ENCODE measurements at regions of chr14 and their contacts with region 1.

Region 1: DNA sequence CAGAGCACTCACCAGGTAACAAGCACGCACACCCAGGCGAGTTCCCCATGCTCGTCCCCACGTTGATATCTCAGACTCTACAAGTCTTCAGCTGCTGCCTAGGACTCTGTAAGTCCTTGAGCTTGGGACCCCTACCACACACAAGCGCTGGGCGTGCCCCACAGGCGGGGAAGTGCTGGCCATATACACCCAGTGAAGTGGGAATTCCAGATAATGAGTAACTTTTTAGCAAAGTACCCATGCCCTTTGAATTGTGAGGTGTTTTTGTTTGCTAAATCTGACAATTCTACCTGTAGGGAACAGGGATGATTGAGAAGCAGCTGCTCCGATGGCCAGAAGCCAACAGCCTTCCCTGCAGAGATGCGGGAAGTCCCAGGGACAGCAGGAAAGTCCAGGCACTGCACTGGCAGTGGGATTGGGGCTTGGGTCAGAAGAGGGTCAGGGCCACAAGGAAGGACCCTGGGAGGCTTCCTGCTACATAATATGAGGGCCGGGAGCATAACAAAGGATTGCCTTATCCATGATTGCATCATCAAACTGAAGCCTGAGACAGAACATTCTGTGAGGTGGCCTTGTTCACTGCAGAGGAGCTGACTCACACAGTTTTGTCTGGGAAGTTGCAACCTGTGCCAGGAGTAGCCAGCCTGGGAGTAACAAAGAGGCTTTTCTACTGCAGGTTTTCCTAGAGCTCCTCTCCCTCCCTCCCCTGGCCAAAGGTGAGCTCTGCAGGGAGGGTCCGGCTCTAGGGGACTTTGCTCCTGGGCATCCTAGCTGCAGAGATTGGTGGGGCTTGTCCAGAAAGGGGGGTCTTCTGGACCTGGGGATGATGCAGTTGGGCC is 13.2 kb upstream of the SERPINA3 start:
- DNase-seq: peak; percentile 91
- H3K4me3 Mint-ChIP-seq: peak overlapping the region; percentile 46
- H3K27ac Mint-ChIP-seq: peak overlapping the region; percentile 95
- H3K4me1 Mint-ChIP-seq: peaks cover 81% of the 10 kb centered on the region
- H3K27me3 Mint-ChIP-seq: no peaks in the 10 kb centered on the region
- CTCF ChIP-seq: peak; percentile 38

Region 2: GRCh38 chr14:94428610-94429009 is 170.4 kb before region 1 on chr14:
- CTCF ChIA-PET with region 1: interaction called, 18 read pairs
- intact Hi-C with region 1: no loop called
- DNase-seq: no peak
- H3K4me3 Mint-ChIP-seq: no peak overlapping the region
- H3K27ac Mint-ChIP-seq: no peak overlapping the region
- H3K4me1 Mint-ChIP-seq: peaks cover 1% of the 10 kb centered on the region
- H3K27me3 Mint-ChIP-seq: peaks cover 24% of the 10 kb centered on the region
- CTCF ChIP-seq: no peak

Region 3: DNA sequence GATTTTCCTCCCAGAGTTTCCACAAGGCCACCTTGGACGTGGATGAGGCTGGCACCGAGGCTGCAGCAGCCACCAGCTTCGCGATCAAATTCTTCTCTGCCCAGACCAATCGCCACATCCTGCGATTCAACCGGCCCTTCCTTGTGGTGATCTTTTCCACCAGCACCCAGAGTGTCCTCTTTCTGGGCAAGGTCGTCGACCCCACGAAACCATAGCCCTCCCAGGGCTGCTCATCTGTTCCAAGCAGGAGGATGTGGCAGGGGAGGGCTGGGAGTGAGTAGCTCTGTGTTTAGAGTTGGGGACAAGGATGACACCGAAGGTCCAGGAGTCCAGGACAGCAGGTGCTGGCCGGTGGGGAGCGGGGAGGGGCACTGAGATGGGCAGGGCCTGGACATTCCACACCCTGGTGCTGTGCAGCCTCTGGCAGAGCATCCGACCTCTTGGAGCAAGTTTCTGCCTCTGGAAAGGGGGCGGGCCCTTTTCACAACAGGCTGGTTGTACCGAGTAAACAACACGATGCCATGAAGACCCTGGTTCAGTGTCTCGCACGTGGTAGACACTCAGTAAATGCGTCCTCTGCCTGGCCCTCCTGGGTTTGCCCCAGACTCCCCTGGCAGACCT is 29.5 kb before region 1 on chr14:
- CTCF ChIA-PET with region 1: no interaction called
- intact Hi-C with region 1: no loop called
- DNase-seq: no peak
- H3K4me3 Mint-ChIP-seq: no peak overlapping the region
- H3K27ac Mint-ChIP-seq: no peak overlapping the region
- H3K4me1 Mint-ChIP-seq: peaks cover 22% of the 10 kb centered on the region
- H3K27me3 Mint-ChIP-seq: no peaks in the 10 kb centered on the region
- CTCF ChIP-seq: no peak

Region 4: DNA sequence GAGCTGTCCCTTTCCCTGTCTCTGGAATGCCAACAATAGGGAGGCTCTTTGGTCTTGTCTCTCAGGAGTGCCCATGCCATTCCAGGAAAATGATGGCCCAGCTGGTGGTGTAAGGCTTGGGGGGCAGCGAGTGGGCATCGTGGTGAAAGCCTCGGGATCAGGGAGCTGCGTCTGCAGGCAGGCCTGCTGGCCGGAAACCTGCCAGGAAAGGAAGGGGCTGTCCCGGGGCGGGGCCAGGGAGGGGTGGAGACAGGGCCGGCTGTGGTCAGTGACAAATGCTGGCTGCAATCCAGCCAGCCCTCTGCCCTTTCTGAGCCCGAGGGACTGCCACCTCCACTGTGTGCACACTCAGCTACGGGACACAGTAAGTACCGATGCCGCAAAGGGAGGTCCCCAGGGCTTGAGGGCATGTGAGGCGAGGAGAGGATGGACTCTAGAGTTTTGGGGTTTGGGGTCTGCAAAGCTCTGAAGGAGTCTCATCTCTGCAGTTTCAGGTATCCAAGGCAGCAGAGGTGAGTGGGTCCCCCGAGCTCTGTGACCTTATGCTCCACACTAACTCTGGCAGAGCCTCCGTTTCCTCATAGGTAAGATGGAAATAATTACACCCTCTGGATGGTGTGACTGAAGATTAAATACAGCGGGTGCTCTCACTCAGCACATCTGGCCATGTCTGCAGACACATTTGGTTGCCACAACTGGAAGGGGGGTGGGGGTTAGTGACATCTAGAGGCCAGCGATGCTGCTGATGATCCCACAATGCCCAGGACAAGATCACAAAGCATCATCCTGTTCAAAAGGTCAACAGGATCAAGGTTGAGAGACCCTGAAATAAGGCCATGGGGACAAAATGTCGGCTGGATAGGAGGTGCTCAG is 17.7 kb before region 1 on chr14 and contains the start of gene SERPINA5:
- CTCF ChIA-PET with region 1: no interaction called
- intact Hi-C with region 1: loop called (anchors 1 kb)
- DNase-seq: peak; percentile 93
- H3K4me3 Mint-ChIP-seq: peak within 1 kb of the TSS; percentile 66
- H3K27ac Mint-ChIP-seq: no peak within 1 kb of the TSS
- H3K4me1 Mint-ChIP-seq: peaks cover 23% of the 10 kb centered on the region
- H3K27me3 Mint-ChIP-seq: no peaks in the 10 kb centered on the region
- CTCF ChIP-seq: no peak
- total RNA-seq, gene SERPINA5: 20.7 and 21.6 TPM in 2 replicates

Region 5: DNA sequence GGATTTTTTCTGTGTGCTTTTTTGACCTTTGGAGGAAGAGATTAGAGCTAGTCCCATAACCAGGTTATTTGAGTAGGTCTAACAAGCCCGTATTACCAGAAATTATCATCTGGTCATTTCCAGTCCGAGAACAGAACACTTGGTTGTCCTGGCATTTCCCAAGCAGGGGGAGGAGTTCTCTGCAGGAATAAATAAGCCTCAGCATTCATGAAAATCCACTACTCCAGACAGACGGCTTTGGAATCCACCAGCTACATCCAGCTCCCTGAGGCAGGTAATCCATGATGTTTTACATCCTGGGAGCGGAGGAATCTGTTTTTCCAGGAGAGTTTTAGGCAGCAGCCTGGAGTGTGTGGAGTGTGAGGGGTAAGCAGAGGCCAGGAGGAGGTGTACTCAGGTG is 13.1 kb after region 1 on chr14 and contains the start of gene SERPINA3:
- CTCF ChIA-PET with region 1: interaction called, 76 read pairs
- intact Hi-C with region 1: loop called (anchors 1 kb)
- DNase-seq: peak; percentile 66
- H3K4me3 Mint-ChIP-seq: peak within 1 kb of the TSS; percentile 77
- H3K27ac Mint-ChIP-seq: no peak within 1 kb of the TSS
- H3K4me1 Mint-ChIP-seq: peaks cover 34% of the 10 kb centered on the region
- H3K27me3 Mint-ChIP-seq: no peaks in the 10 kb centered on the region
- CTCF ChIP-seq: no peak
- total RNA-seq, gene SERPINA3: 1,748 and 2,914 TPM in 2 replicates

Measured in Calu3 (cell line).